Lower lobe of right lung (tissue), 2 donors: ENCODE measurements at regions of chr5 and their contacts with region 1.

Region 1: GRCh38 chr5:42583322-42583721 is 160.1 kb downstream of the GHR start:
- DNase-seq: no peak
- ATAC-seq: peak; percentile 65 to 71
- H3K4me3 ChIP-seq: no peak overlapping the region
- H3K27ac ChIP-seq: no peak overlapping the region
- H3K4me1 ChIP-seq: peaks cover 4% of the 10 kb centered on the region
- H3K27me3 ChIP-seq: no peaks in the 10 kb centered on the region
- CTCF ChIP-seq: peak; percentile 85

Region 2: DNA sequence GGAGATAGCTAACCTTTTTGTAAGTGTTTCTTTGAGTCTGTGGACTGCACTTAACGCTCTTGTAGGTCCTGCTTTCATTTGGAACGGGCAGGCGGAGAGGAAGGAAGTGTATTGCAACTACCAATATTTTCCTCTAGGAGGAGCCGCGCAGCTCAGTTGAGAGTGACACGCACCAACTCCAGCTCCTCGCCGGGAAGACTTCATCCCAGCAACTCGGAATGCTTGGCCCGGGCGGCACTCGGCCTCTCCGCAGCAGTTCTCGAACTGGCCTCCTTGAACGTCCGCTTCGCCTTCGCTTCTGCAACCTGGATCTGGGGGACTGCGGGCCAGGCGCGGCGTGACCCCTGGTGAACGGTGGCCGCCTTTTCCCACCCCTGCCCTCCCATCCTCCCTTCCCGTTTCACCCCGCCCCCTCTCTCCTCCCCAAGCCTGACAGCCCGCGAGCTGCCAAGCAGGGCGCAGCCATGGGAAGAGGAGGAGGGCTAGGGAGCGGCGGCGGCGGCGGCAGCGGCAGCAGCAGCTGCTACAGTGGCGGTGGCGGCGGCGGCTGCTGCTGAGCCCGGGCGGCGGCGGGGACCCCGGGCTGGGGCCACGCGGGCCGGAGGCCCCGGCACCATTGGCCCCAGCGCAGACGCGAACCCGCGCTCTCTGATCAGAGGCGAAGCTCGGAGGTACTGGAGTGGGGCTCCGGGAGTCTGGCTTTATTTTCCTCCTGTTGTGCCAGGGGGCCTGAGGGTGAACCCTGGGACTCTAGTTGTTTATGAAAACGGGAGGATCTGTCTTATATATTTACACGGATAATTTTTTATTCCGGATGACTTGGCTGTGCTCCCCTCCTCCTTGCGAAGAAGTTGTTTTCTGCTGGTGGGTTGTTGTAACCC is 159.8 kb before region 1 on chr5 and contains the start of gene GHR:
- intact Hi-C with region 1: loop called (anchors 10 kb)
- DNase-seq: peak; percentile 79
- ATAC-seq: peak; percentile 94 to 97
- H3K4me3 ChIP-seq: peak within 1 kb of the TSS; percentile 72
- H3K27ac ChIP-seq: peak within 1 kb of the TSS; percentile 75
- H3K4me1 ChIP-seq: peaks cover 19% of the 10 kb centered on the region
- H3K27me3 ChIP-seq: peaks cover 9% of the 10 kb centered on the region
- CTCF ChIP-seq: peak; percentile 70
- total RNA-seq, gene GHR: 5.2 TPM